ENCODE measurements at regions of chr3 and their contacts with region 1.

Region 1: GRCh38 chr3:187745201-187746058 is at the start of gene BCL6:
- DNase-seq: peak; percentile 97
- H3K4me3 ChIP-seq: peak within 1 kb of the TSS; percentile 70
- H3K27ac ChIP-seq: peak within 1 kb of the TSS; percentile 100
- H3K4me1 ChIP-seq: peaks cover 34% of the 10 kb centered on the region
- H3K27me3 ChIP-seq: no peaks in the 10 kb centered on the region
- CTCF ChIP-seq: no peak; the same call in 1 of the 2 replicates
- total RNA-seq, gene BCL6: 30.3 and 31.7 TPM in 2 replicates

Region 2: GRCh38 chr3:187519428-187519890 is 226.0 kb before region 1 on chr3:
- CTCF ChIA-PET with region 1: no interaction called
- POLR2A ChIA-PET with region 1: no interaction called
- intact Hi-C with region 1: no loop called
- DNase-seq: peak; percentile 72
- H3K4me3 ChIP-seq: no peak overlapping the region
- H3K27ac ChIP-seq: no peak overlapping the region
- H3K4me1 ChIP-seq: peaks cover 10% of the 10 kb centered on the region
- H3K27me3 ChIP-seq: no peaks in the 10 kb centered on the region
- CTCF ChIP-seq: no peak

Region 3: GRCh38 chr3:188049606-188050530 is 304.4 kb after region 1 on chr3:
- CTCF ChIA-PET with region 1: no interaction called
- POLR2A ChIA-PET with region 1: no interaction called
- intact Hi-C with region 1: loop called (anchors 10 kb)
- DNase-seq: no peak
- H3K4me3 ChIP-seq: no peak overlapping the region
- H3K27ac ChIP-seq: no peak overlapping the region
- H3K4me1 ChIP-seq: peaks cover 16% of the 10 kb centered on the region
- H3K27me3 ChIP-seq: no peaks in the 10 kb centered on the region
- CTCF ChIP-seq: no peak

Region 4: GRCh38 chr3:188362405-188362831 is 617.0 kb after region 1 on chr3:
- CTCF ChIA-PET with region 1: no interaction called
- POLR2A ChIA-PET with region 1: no interaction called
- intact Hi-C with region 1: loop called (anchors 10 kb)
- DNase-seq: no peak
- H3K4me3 ChIP-seq: no peak overlapping the region
- H3K27ac ChIP-seq: no peak overlapping the region
- H3K4me1 ChIP-seq: peaks cover 4% of the 10 kb centered on the region
- H3K27me3 ChIP-seq: no peaks in the 10 kb centered on the region
- CTCF ChIP-seq: no peak

Region 5: DNA sequence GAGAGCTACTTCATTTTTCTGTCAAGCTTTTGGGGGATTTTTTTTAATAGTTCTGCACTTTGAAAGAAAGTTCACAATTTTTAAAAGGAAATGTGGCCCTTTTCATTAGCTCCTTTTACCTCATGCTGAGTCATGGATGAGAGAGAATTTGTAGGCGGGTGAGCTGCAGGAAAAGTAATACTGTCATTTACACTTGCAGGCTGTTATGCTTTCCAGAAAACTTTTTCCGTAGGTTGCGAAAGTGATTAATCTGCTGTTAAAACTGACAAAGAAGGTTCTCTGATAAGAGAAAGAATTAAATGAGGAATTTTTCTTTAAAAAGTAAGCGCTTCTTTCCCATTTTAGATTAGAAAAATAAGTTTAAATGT is 838.7 kb after region 1 on chr3:
- CTCF ChIA-PET with region 1: no interaction called
- POLR2A ChIA-PET with region 1: no interaction called
- intact Hi-C with region 1: loop called (anchors 10 kb)
- DNase-seq: peak; percentile 66
- H3K4me3 ChIP-seq: peak overlapping the region; percentile 19
- H3K27ac ChIP-seq: peak overlapping the region; percentile 9
- H3K4me1 ChIP-seq: peaks cover 22% of the 10 kb centered on the region
- H3K27me3 ChIP-seq: no peaks in the 10 kb centered on the region
- CTCF ChIP-seq: no peak

Region 6: DNA sequence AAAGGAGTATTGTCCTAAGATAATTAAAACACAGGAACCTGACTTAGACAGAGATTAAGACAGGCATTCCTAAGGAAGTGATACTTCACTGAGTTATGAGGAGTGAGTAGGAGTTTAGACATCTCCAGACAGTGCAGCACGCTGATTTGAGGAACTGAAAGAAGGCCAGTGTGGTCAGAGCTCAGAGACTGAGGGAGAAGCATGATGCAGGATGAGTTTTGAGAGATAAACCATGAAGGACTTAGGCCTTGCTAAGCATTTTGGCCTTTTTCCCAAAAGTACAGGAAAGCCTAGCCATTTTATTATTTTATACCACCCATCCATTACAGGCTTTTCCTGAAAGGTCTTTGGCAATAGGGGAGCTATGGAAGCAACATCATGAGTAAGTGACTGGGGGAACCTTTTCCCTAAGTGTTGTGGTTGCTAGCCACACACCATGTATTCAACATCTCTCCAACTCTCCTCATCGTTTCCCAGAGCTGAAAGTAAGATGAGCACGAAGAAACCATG is 1050.7 kb after region 1 on chr3:
- CTCF ChIA-PET with region 1: no interaction called
- POLR2A ChIA-PET with region 1: no interaction called
- intact Hi-C with region 1: loop called (anchors 10 kb)
- DNase-seq: peak; percentile 17
- H3K4me3 ChIP-seq: no peak overlapping the region
- H3K27ac ChIP-seq: no peak overlapping the region
- H3K4me1 ChIP-seq: peaks cover 8% of the 10 kb centered on the region
- H3K27me3 ChIP-seq: no peaks in the 10 kb centered on the region
- CTCF ChIP-seq: no peak

Measured in A673 (cell line).